GM12878 (cell line): ENCODE measurements at regions of chr22 and their contacts with region 1.

Region 1: DNA sequence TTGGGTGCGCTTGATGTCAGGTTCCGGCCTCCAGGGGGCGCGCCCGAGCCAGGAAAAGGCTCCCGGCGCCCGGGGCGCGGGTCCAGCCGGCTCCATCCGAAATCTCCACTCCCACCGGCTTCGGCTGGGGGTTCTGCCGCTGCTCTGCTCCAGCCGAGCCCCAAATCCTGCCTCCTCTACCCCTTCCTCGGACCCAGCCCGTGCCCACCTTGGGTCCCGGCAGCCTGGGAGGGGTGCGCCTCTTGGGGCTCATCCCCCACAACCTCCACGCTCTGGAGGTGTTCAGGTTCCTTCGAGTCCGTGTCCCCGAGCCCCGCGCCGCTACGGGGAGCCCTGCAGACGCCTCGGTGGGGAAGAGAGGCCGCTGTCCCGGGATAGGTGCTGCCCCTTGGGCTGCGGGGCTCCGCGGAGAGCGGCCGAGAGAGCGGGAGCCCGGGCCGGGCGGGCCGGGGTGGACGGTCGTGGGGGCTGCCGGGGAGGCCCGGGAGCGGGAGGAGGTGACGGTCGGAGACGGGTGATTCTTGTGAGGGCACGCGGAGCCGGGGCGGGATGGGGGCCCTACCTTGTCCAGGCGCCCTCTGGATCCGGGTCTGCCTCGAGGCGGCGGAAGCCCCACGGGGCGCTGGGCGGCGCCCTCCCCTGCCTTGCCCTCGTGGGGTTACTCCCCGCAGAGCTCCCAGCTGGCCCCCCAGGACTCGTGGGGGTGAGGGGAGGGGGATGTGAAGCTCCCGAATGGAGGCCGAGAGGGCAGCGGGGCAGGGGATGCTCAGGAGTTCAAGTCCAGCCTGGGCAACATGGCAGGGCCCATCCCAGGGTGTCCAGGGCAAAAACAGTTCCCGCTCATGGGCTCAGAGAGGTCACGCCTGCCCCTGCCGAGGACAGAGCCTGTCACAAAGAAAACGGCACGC is 13.2 kb upstream of the CYB5R3 start:
- DNase-seq: no peak
- ATAC-seq: peak; percentile 74
- H3K4me3 ChIP-seq: peak overlapping the region; percentile 62; the same call in 1 of the 2 replicates
- H3K27ac ChIP-seq: peak overlapping the region; percentile 61
- H3K4me1 ChIP-seq: peaks cover 33% of the 10 kb centered on the region
- H3K27me3 ChIP-seq: no peaks in the 10 kb centered on the region
- CTCF ChIP-seq: peak; percentile 78 to 90 (median 85)
- EP300 ChIP-seq: no peak
- POLR2A ChIP-seq: peak; percentile 58
- RAD21 ChIP-seq: peak; percentile 66

Region 2: DNA sequence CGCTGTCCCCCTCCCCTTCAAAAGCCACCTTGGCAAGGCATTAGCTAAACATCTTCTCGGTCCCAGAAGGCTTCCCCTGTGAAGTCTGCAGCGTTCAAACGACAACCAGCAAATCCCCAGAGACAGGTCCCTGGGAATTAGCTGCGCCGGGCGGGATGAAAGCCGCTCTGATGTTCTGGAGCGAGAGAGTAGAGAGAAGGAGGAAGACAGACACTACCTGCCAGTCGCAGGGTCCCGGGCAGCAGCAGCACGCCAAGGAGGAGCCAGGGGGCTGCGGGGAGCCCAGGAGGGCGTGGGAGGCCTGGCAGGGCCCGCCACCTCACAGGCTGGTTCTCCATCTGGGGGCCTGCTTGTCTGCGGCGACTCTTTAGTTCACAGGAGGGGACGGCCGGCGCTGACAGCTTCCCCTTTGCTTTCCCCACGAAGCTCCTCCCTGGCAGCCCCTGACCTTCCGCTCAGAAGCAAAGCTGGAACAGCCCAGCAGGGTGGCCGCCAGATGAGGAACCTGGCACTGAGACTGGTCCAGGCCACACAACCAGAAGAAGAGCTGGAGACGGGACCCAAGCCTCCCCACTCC is 230.3 kb before region 1 on chr22 and contains the start of gene NFAM1:
- CTCF ChIA-PET with region 1: no interaction called
- POLR2A ChIA-PET with region 1: no interaction called
- RAD21 ChIA-PET with region 1: no interaction called
- SMC1A ChIA-PET with region 1: no interaction called
- in situ Hi-C with region 1: no loop called
- intact Hi-C with region 1: no loop called
- DNase-seq: no peak
- ATAC-seq: peak; percentile 10; the same call in 1 of the 3 replicates
- H3K4me3 ChIP-seq: no peak within 1 kb of the TSS
- H3K27ac ChIP-seq: no peak within 1 kb of the TSS
- H3K4me1 ChIP-seq: no peaks in the 10 kb centered on the region; the same call in 1 of the 2 replicates
- H3K27me3 ChIP-seq: no peaks in the 10 kb centered on the region
- CTCF ChIP-seq: no peak
- EP300 ChIP-seq: no peak
- POLR2A ChIP-seq: no peak
- RAD21 ChIP-seq: no peak
- polyA plus RNA-seq, gene NFAM1: not detected

Region 3: GRCh38 chr22:42621505-42622002 is 40.8 kb before region 1 on chr22:
- CTCF ChIA-PET with region 1: interaction called, 10 read pairs
- POLR2A ChIA-PET with region 1: no interaction called
- RAD21 ChIA-PET with region 1: no interaction called
- SMC1A ChIA-PET with region 1: interaction called, 7 read pairs
- in situ Hi-C with region 1: no loop called
- intact Hi-C with region 1: no loop called
- DNase-seq: no peak
- ATAC-seq: peak; percentile 93
- H3K4me3 ChIP-seq: no peak overlapping the region
- H3K27ac ChIP-seq: no peak overlapping the region
- H3K4me1 ChIP-seq: peaks cover 8% of the 10 kb centered on the region
- H3K27me3 ChIP-seq: no peaks in the 10 kb centered on the region
- CTCF ChIP-seq: peak; percentile 86 to 97 (median 95)
- EP300 ChIP-seq: no peak
- POLR2A ChIP-seq: peak; percentile 34
- RAD21 ChIP-seq: peak; percentile 61

Region 4: GRCh38 chr22:42717197-42717928 is 55.0 kb after region 1 on chr22:
- CTCF ChIA-PET with region 1: interaction called, 21 read pairs
- POLR2A ChIA-PET with region 1: interaction called, 6 read pairs
- RAD21 ChIA-PET with region 1: interaction called, 5 read pairs
- SMC1A ChIA-PET with region 1: interaction called, 5 read pairs
- in situ Hi-C with region 1: no loop called
- intact Hi-C with region 1: loop called (anchors 2 kb)
- DNase-seq: no peak
- ATAC-seq: peak; percentile 36
- H3K4me3 ChIP-seq: peak overlapping the region; percentile 49
- H3K27ac ChIP-seq: peak overlapping the region; percentile 81
- H3K4me1 ChIP-seq: peaks cover 41% of the 10 kb centered on the region
- H3K27me3 ChIP-seq: no peaks in the 10 kb centered on the region; a peak in 1 of 4 replicates
- CTCF ChIP-seq: no peak
- EP300 ChIP-seq: 0 out of 4 replicates have a peak, but pooled peaks of 1 of the 2 experiments have one; percentile 2
- POLR2A ChIP-seq: no peak
- RAD21 ChIP-seq: no peak

Region 5: DNA sequence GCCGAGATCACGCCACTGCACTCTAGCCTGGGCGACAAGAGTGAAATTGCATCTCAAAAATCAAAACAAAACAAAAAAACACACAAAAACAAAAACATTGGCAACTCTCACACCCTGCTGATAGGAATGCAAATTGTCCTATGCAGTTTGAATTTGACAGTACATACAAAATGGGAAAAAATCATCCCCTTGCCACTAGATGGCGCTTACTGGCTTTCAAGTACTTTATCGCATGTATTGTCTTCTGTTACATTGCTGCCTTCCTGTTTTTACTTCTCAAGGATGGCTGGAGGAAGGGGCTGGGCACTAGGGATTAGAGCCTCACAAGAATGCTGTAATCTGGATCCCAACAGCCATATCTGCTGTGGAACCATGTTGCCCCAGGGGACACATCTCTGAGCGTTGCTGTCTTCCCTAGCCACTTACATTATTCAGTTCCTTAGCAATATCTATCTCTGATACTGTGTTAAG is 117.7 kb after region 1 on chr22:
- CTCF ChIA-PET with region 1: interaction called, 14 read pairs
- POLR2A ChIA-PET with region 1: no interaction called
- RAD21 ChIA-PET with region 1: interaction called, 5 read pairs
- SMC1A ChIA-PET with region 1: interaction called, 6 read pairs
- in situ Hi-C with region 1: no loop called
- intact Hi-C with region 1: no loop called
- DNase-seq: peak; percentile 59
- ATAC-seq: peak; percentile 91
- H3K4me3 ChIP-seq: no peak overlapping the region
- H3K27ac ChIP-seq: no peak overlapping the region
- H3K4me1 ChIP-seq: no peaks in the 10 kb centered on the region
- H3K27me3 ChIP-seq: no peaks in the 10 kb centered on the region
- CTCF ChIP-seq: peak; percentile 61 to 92 (median 85); a peak in 5 of 6 replicates
- EP300 ChIP-seq: no peak
- POLR2A ChIP-seq: no peak
- RAD21 ChIP-seq: peak; percentile 77

Region 6: GRCh38 chr22:42863349-42863961 is 201.1 kb after region 1 on chr22:
- CTCF ChIA-PET with region 1: interaction called, 14 read pairs
- POLR2A ChIA-PET with region 1: no interaction called
- RAD21 ChIA-PET with region 1: interaction called, 15 read pairs
- SMC1A ChIA-PET with region 1: interaction called, 6 read pairs
- in situ Hi-C with region 1: loop called (anchors 5 kb)
- intact Hi-C with region 1: no loop called
- DNase-seq: peak; percentile 46
- ATAC-seq: peak; percentile 16; the same call in 2 of the 3 replicates
- H3K4me3 ChIP-seq: no peak overlapping the region
- H3K27ac ChIP-seq: peak overlapping the region; percentile 24; the same call in 1 of the 2 replicates
- H3K4me1 ChIP-seq: peaks cover 9% of the 10 kb centered on the region
- H3K27me3 ChIP-seq: no peaks in the 10 kb centered on the region
- CTCF ChIP-seq: no peak
- EP300 ChIP-seq: no peak
- POLR2A ChIP-seq: no peak
- RAD21 ChIP-seq: no peak